ENCODE measurements at regions of chr9 and their contacts with region 1.

Region 1: DNA sequence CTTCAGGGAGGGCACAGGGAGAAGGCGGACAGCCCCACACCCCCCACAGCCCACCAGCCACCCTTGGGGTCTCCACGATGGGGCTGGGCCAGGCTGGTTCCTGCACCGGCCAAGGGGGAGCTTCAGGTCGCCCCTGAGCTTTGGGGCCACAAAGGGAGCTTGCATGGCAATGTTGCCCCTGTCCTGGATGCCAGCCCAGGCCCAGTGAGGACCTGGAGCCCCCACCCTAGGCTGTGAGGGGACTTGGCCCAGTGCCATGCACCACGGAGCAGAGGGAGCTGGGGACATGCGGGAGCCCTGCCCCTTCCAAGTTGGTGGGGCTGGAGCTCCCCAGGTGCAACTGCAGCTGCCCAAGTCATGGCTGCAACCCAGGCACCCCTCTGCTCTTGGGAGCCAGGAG is 18.4 kb downstream of the TMEM38B start:
- DNase-seq: peak in 1 of 5 donors; percentile 27
- ATAC-seq: peak in 3 of 4 donors; percentile 11 to 25 (median 20)
- H3K4me3 ChIP-seq: no peak overlapping the region
- H3K27ac ChIP-seq: peak overlapping the region in 3 of 12 donors; percentile 11 to 67 (median 65)
- H3K4me1 ChIP-seq: peaks cover 0 to 14% (median 1%) of the 10 kb centered on the region in 12 donors
- H3K27me3 ChIP-seq: no peaks in the 10 kb centered on the region
- CTCF ChIP-seq: no peak
- POLR2A ChIP-seq: no peak

Region 2: GRCh38 chr9:105438141-105438806 is 274.5 kb before region 1 on chr9:
- intact Hi-C with region 1: loop called in 2 of 10 experiments (anchors 10 kb)
- DNase-seq: no peak
- ATAC-seq: peak in 2 of 4 donors; percentile 31 to 62
- H3K4me3 ChIP-seq: no peak overlapping the region
- H3K27ac ChIP-seq: peak overlapping the region in 4 of 12 donors; percentile 2 to 46 (median 32)
- H3K4me1 ChIP-seq: peaks cover 0 to 30% (median 8%) of the 10 kb centered on the region in 12 donors
- H3K27me3 ChIP-seq: no peaks in the 10 kb centered on the region
- CTCF ChIP-seq: no peak
- POLR2A ChIP-seq: no peak

Region 3: GRCh38 chr9:105447814-105448812 is 264.7 kb before region 1 on chr9 and contains the start of gene FSD1L:
- intact Hi-C with region 1: loop called in 1 of 10 experiments (anchors 10 kb)
- DNase-seq: peak; percentile 94 to 98 (median 97)
- ATAC-seq: peak; percentile 92 to 98 (median 97)
- H3K4me3 ChIP-seq: peak within 1 kb of the TSS; percentile 69 to 99 (median 84)
- H3K27ac ChIP-seq: peak within 1 kb of the TSS; percentile 45 to 93 (median 80)
- H3K4me1 ChIP-seq: peaks cover 0 to 43% (median 17%) of the 10 kb centered on the region in 12 donors
- H3K27me3 ChIP-seq: no peaks in the 10 kb centered on the region
- CTCF ChIP-seq: peak in 10 of 12 donors; percentile 27 to 50 (median 36)
- POLR2A ChIP-seq: peak in 1 of 2 donors; percentile 63
- total RNA-seq, gene FSD1L: 3.7 to 14.0 (median 8.7) TPM

Region 4: DNA sequence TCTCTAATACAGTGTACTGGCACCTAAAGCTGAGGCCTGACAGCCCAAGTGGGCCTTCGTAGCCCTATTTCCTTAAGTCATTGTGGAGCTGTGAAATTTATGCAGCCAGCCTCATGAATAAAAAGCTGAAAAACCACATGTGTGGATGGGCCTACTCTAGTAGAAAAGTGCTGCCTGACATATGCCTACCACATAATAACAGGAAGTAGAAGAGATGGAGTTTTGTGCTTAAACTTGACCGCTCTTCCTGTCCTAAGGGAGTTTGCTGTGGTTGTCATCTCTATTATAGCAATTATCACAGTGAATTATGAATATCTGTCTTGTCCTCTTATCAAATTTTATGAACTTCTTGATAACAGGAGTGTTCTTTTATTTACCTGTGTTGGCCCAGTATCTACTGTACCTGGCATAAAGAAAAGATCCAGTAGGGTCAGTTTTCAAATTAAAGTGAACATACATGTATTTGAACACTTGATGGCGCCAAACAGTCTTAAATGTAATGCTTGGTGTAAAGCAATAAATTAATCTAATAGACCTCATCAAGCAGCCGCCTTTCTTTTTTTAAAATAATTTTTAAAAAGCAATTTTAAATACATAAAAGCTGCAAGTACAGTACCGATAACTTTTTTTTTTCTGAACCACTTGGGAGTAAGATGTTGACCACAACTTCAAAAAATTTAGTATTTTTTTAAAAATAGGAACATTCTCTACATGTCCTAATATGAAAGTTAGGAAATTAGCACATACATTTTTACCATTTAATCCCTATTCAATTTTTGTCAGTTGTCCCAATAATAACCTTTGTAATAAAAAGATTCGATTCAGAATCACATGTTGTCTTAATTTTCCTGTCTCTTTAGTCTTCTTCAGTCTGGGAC is 103.8 kb before region 1 on chr9:
- intact Hi-C with region 1: loop called in 6 of 10 experiments (anchors 5 to 10 kb)
- DNase-seq: no peak
- ATAC-seq: peak in 1 of 4 donors; percentile 56
- H3K4me3 ChIP-seq: no peak overlapping the region
- H3K27ac ChIP-seq: no peak overlapping the region
- H3K4me1 ChIP-seq: no peaks in the 10 kb centered on the region
- H3K27me3 ChIP-seq: no peaks in the 10 kb centered on the region
- CTCF ChIP-seq: peak; percentile 44 to 72 (median 58)
- POLR2A ChIP-seq: no peak

Region 5: GRCh38 chr9:105656131-105656921 is 56.4 kb before region 1 on chr9:
- intact Hi-C with region 1: loop called in 7 of 10 experiments (anchors 5 to 10 kb)
- DNase-seq: peak; percentile 8 to 70 (median 28)
- ATAC-seq: peak; percentile 49 to 94 (median 84)
- H3K4me3 ChIP-seq: peak overlapping the region; percentile 39 to 65 (median 58)
- H3K27ac ChIP-seq: no peak overlapping the region
- H3K4me1 ChIP-seq: peaks cover 0 to 15% (median 5%) of the 10 kb centered on the region in 12 donors
- H3K27me3 ChIP-seq: peaks cover 0 to 26% (median 2%) of the 10 kb centered on the region in 9 donors
- CTCF ChIP-seq: peak; percentile 8 to 61 (median 44)
- POLR2A ChIP-seq: no peak

Region 6: DNA sequence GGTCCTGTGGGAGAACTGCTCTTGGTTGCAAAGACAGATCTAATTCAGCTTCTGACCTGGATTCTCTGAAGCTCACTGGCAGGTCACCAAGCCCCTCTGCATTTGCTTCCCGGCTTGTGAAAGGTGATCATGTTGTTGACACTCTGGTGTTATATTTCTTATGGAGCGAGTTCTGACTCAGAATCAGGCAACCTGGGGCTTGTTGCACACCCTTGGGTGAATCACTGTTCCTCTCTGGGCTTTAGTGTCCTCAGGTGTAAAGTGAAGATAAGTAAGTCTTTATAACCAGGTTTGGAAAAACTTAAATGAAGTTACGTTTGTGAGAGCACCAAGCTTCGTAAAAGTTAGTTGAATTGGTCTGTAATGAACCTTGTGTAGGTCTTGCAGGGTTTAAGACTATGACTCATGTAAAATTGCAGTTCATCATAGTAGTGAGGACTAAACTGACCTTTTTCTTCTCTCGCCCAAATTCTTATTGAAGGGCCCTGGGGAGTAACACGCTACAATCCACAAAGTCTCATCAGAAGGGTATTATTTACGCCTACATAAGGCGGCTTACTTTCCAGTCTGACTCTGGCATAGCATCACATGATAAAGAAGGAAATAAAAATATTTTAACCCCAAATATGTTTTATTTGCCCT is 200.2 kb after region 1 on chr9:
- intact Hi-C with region 1: no loop called
- DNase-seq: no peak
- ATAC-seq: no peak
- H3K4me3 ChIP-seq: no peak overlapping the region
- H3K27ac ChIP-seq: no peak overlapping the region
- H3K4me1 ChIP-seq: peaks cover 0 to 6% (median 0%) of the 10 kb centered on the region in 12 donors
- H3K27me3 ChIP-seq: no peaks in the 10 kb centered on the region
- CTCF ChIP-seq: no peak
- POLR2A ChIP-seq: no peak